ENCODE measurements at regions of chr13 and their contacts with region 1.

Region 1: DNA sequence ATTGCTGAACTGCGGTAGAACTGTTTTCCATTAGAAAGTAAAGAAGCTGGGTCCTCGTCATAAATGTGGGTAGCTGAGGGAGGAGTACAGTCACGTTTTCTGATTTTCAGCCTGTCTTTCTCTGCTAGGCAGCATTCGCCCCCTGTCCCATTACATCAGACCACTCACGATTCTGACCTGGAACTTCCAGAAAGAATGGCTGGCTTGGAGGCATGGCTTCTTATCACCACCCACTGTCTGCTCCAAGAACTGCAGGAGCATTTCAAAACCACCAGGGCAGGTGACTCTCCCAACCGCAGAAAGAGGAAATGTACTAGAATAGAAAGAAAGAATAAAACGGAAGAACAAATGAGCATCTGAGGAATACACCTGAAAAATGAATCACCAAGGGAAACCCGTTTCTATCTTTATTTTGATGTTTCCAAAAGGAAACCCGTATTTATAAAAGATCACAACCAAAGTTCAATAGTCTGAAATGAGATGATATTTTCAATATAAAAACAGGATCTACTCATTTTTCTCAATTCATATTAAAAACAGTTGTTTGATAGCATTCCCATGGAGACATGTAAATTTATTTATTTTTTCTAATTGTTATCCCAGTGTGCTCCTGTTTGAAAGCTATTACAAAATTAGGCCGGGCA is 22.1 kb upstream of the POMP start:
- DNase-seq: peak; percentile 36
- H3K4me3 ChIP-seq: no peak overlapping the region
- H3K27ac ChIP-seq: no peak overlapping the region
- H3K4me1 ChIP-seq: no peaks in the 10 kb centered on the region
- H3K27me3 ChIP-seq: no peaks in the 10 kb centered on the region
- CTCF ChIP-seq: peak; percentile 91 to 92

Region 2: DNA sequence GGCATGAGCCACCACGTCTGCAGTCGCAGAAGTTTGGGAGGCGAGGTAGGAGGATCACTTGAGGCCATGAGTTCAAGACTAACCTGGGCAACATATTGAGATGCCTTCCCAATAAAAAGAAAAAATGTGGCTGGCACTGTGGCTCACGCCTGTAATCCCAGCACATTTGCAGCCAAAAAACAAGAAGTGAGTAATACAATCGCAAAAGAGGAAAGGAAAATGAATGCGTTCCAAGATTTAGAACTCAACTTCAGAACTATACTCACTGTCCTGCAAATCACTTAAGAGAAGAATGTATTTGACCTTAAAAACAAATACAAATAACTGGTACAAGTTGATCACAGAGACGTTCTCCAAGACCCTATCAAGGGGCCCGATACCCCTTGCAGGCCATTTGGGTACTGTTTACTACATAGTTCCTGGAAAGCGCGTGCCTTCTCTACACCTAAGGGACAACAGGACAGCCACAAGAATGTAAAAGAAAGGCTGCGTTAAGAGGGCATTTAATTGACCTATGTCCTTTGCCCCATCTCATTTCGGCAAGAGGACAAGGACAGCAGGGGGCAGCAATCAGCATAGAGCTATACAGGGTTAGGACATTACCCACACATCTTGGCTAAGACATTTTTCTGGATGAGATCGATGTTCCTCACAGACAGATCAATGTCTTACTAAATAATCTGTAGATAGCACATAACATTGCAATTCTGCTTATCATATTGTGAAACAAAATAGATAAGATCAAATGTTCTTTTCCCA is 577.8 kb before region 1 on chr13:
- CTCF ChIA-PET with region 1: no interaction called
- dilution Hi-C with region 1: no loop called
- in situ Hi-C with region 1: loop called (anchors 25 kb)
- intact Hi-C with region 1: loop called (anchors 1 kb)
- DNase-seq: peak; percentile 16
- H3K4me3 ChIP-seq: no peak overlapping the region
- H3K27ac ChIP-seq: no peak overlapping the region
- H3K4me1 ChIP-seq: no peaks in the 10 kb centered on the region
- H3K27me3 ChIP-seq: no peaks in the 10 kb centered on the region
- CTCF ChIP-seq: peak; percentile 45 to 67

Region 3: GRCh38 chr13:28611654-28612131 is 25.1 kb before region 1 on chr13:
- CTCF ChIA-PET with region 1: no interaction called
- dilution Hi-C with region 1: no loop called
- in situ Hi-C with region 1: no loop called
- intact Hi-C with region 1: no loop called
- DNase-seq: no peak
- H3K4me3 ChIP-seq: no peak overlapping the region
- H3K27ac ChIP-seq: no peak overlapping the region
- H3K4me1 ChIP-seq: no peaks in the 10 kb centered on the region
- H3K27me3 ChIP-seq: no peaks in the 10 kb centered on the region
- CTCF ChIP-seq: no peak